ENCODE measurements at regions of chr11 and their contacts with region 1.

Region 1: DNA sequence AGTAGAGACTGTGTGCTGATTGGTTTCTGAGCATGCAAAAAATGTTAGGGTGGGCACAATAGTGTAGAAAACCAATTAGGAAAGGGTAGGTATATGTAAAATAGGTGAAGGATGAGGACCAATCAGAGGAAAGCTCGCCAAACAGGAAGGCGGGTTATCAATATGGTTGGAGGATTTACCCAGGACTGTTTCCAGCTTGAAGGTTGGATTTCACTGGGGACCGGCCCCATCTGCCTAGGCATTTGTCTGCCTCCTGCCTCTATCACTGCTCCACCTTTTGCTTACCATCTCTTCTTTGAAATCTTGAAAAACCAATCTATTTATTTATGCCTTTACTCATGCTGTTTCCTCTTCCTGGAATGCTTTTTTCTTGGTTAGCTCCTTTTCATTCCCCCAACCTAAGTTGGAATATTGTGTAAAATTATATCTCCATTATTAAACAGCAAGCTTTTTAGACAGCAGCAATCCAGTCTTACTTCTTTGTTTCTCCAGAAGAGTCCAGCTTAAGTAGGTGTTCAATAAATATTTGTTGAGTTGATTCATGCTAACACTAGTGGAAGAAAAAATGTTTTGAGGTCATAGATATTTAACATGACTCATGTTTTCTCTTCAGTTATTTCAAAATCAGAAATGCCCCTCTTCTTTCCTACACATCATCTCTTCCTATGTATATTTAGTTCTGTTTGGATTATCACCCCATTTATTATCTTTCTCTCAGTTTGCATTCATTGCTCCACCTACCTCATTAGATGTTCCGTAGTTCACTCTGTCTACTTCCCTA is 20.1 kb downstream of the CCDC83 start:
- DNase-seq: no peak
- H3K4me3 ChIP-seq: no peak overlapping the region
- H3K4me3 Mint-ChIP-seq: no peak overlapping the region
- H3K27ac Mint-ChIP-seq: no peak overlapping the region
- H3K4me1 ChIP-seq: peaks cover 6% of the 10 kb centered on the region; the same call in 1 of the 2 replicates
- H3K4me1 Mint-ChIP-seq: peaks cover 11% of the 10 kb centered on the region
- H3K27me3 ChIP-seq: no peaks in the 10 kb centered on the region
- H3K27me3 Mint-ChIP-seq: no peaks in the 10 kb centered on the region
- CTCF ChIP-seq: no peak

Region 2: DNA sequence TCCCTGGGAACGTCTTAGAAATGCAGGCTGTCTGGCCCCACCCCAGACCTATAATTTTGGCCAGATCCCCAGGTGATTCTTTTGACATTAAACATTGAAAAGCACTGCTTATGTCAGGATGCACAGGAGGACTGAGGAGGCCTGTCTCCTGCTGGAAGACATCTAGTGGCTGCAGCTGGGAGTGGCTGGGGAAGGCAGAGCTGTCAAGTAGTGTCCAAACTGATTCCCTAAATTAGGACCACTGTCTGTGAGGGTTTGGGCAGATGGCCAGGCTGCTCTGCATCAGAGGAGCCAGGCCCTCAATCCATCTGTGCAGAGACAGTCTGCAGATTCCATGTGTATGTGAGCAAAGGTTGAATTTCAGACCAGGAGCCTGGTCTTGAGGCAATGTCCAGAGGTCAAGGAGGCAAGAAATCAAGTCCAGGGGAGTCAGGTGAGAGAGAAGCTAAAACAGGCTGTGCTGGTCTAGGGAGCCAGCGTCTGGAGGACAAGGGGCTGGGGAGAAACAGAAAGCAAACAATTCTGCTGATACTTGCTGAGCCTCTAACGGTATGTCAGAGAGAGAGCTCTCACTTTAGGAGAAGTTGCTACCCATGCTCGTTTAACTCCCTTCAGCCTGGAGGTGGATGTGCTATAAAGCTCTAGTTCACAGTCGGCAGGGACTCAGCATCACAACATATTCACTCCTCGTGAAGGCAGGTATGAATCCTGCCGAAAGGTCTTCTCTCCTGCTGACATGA is 49.0 kb before region 1 on chr11:
- CTCF ChIA-PET with region 1: no interaction called
- POLR2A ChIA-PET with region 1: no interaction called
- intact Hi-C with region 1: no loop called
- DNase-seq: peak; percentile 78 to 80
- H3K4me3 ChIP-seq: no peak overlapping the region
- H3K4me3 Mint-ChIP-seq: peak overlapping the region; percentile 14
- H3K27ac Mint-ChIP-seq: peak overlapping the region; percentile 17
- H3K4me1 ChIP-seq: peaks cover 47% of the 10 kb centered on the region
- H3K4me1 Mint-ChIP-seq: peaks cover 37% of the 10 kb centered on the region
- H3K27me3 ChIP-seq: no peaks in the 10 kb centered on the region
- H3K27me3 Mint-ChIP-seq: no peaks in the 10 kb centered on the region
- CTCF ChIP-seq: peak; percentile 75 to 90

Region 3: GRCh38 chr11:85889676-85890579 is 14.6 kb after region 1 on chr11:
- CTCF ChIA-PET with region 1: no interaction called
- POLR2A ChIA-PET with region 1: no interaction called
- intact Hi-C with region 1: no loop called
- DNase-seq: peak; percentile 60 to 73
- H3K4me3 ChIP-seq: no peak overlapping the region
- H3K4me3 Mint-ChIP-seq: peak overlapping the region; percentile 18
- H3K27ac Mint-ChIP-seq: peak overlapping the region; percentile 49
- H3K4me1 ChIP-seq: peaks cover 31% of the 10 kb centered on the region
- H3K4me1 Mint-ChIP-seq: peaks cover 28% of the 10 kb centered on the region
- H3K27me3 ChIP-seq: no peaks in the 10 kb centered on the region
- H3K27me3 Mint-ChIP-seq: no peaks in the 10 kb centered on the region
- CTCF ChIP-seq: no peak

Region 4: DNA sequence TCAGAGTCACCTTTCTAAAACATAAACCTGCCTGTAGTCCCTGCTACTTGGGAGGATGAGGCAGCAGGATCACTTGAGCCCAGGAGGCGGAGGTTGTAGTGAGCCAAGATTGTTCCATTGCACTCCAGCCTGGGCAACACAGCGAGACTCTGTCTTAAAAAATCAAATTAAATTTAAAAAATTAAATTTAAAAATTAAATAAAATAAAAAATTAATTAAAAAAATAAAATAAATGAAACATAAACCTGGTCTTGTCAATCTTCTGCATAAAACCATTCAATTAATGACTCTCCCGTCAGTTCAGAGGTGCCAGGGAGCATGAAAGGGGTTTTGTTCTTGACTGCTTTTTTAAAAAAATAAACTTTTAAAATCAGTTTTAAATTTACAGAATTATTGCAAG is 28.5 kb after region 1 on chr11:
- CTCF ChIA-PET with region 1: no interaction called
- POLR2A ChIA-PET with region 1: no interaction called
- intact Hi-C with region 1: loop called (anchors 1 kb)
- DNase-seq: no peak
- H3K4me3 ChIP-seq: no peak overlapping the region
- H3K4me3 Mint-ChIP-seq: no peak overlapping the region
- H3K27ac Mint-ChIP-seq: no peak overlapping the region
- H3K4me1 ChIP-seq: no peaks in the 10 kb centered on the region
- H3K4me1 Mint-ChIP-seq: no peaks in the 10 kb centered on the region
- H3K27me3 ChIP-seq: no peaks in the 10 kb centered on the region
- H3K27me3 Mint-ChIP-seq: no peaks in the 10 kb centered on the region
- CTCF ChIP-seq: no peak

Region 5: GRCh38 chr11:85914425-85914824 is 39.1 kb after region 1 on chr11:
- CTCF ChIA-PET with region 1: no interaction called
- POLR2A ChIA-PET with region 1: no interaction called
- intact Hi-C with region 1: no loop called
- DNase-seq: no peak
- H3K4me3 ChIP-seq: no peak overlapping the region
- H3K4me3 Mint-ChIP-seq: no peak overlapping the region
- H3K27ac Mint-ChIP-seq: no peak overlapping the region
- H3K4me1 ChIP-seq: peaks cover 8% of the 10 kb centered on the region
- H3K4me1 Mint-ChIP-seq: peaks cover 11% of the 10 kb centered on the region
- H3K27me3 ChIP-seq: no peaks in the 10 kb centered on the region
- H3K27me3 Mint-ChIP-seq: no peaks in the 10 kb centered on the region
- CTCF ChIP-seq: no peak